ENCODE measurements at regions of chr12 and their contacts with region 1.

Region 1: GRCh38 chr12:12008931-12009611 is 61.7 kb upstream of the BCL2L14 start:
- DNase-seq: peak in 4 of 5 donors; percentile 14 to 69 (median 21)
- H3K4me3 ChIP-seq: no peak overlapping the region
- H3K4me3 Mint-ChIP-seq: peak overlapping the region; percentile 55 to 94 (median 78)
- H3K27ac ChIP-seq: no peak overlapping the region
- H3K27ac Mint-ChIP-seq: peak overlapping the region; percentile 90 to 99 (median 94)
- H3K4me1 ChIP-seq: peaks cover 49% of the 10 kb centered on the region
- H3K4me1 Mint-ChIP-seq: peaks cover 58 to 84% (median 74%) of the 10 kb centered on the region in 3 donors
- H3K27me3 ChIP-seq: no peaks in the 10 kb centered on the region
- H3K27me3 Mint-ChIP-seq: peaks cover 0 to 6% of the 10 kb centered on the region in 2 donors

Region 2: DNA sequence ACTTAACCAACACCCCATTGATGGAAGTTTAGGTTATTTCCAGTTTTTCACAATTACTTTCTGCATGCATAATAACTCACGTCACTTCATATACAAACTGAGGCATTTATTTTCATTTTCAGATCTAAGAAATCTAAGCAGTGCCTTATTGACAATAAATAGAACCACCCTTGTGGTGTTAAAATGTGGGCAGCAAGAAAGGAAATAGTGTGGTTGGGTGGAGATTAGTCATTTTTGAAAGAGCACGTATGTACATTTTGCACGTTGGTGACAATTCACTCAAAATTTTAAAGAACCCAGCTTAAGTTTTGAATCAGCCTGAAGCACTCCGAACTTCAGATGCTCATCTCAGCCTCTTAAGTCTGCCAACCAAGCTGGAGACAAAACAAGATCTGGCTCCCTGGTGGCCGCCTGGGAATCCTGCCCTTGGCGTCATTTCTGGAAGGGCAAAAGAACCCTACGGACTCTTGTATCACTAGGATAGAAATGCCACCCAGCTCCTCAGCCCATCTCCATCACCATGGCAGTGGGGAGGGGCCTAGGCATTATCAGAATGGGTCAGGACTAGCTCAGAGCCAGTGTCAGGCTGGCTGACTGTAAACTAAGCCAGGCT is 27.8 kb before region 1 on chr12:
- CTCF ChIA-PET with region 1: interaction called, 20 read pairs
- POLR2A ChIA-PET with region 1: interaction called, 4 read pairs
- DNase-seq: peak; percentile 3 to 88 (median 65)
- H3K4me3 ChIP-seq: peak overlapping the region; percentile 35
- H3K4me3 Mint-ChIP-seq: peak overlapping the region; percentile 0 to 76 (median 58)
- H3K27ac ChIP-seq: peak overlapping the region; percentile 49
- H3K27ac Mint-ChIP-seq: peak overlapping the region; percentile 55 to 99 (median 94)
- H3K4me1 ChIP-seq: peaks cover 32% of the 10 kb centered on the region
- H3K4me1 Mint-ChIP-seq: peaks cover 41 to 64% (median 62%) of the 10 kb centered on the region in 3 donors
- H3K27me3 ChIP-seq: no peaks in the 10 kb centered on the region
- H3K27me3 Mint-ChIP-seq: no peaks in the 10 kb centered on the region

Region 3: DNA sequence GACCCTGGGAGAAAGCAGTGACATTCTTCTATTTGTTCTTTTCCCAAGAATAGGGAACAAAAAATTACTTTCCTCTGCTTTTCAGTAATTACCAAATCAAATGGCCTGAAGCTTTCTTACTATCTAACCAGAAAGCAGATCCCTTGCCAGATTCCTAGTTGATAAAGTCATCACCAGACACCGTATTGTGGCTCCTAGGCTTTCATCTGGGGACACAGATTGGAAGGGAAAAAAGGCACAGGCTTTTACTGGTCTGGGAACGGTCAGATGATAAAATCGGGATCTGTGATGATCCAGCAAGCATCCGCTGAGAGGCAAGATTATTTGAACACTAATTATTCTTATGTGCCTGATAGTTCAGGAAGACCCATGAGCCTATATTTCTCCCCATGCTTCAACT is 17.5 kb before region 1 on chr12:
- CTCF ChIA-PET with region 1: interaction called, 10 read pairs
- POLR2A ChIA-PET with region 1: no interaction called
- DNase-seq: no peak
- H3K4me3 ChIP-seq: no peak overlapping the region
- H3K4me3 Mint-ChIP-seq: no peak overlapping the region
- H3K27ac ChIP-seq: no peak overlapping the region
- H3K27ac Mint-ChIP-seq: no peak overlapping the region
- H3K4me1 ChIP-seq: no peaks in the 10 kb centered on the region
- H3K4me1 Mint-ChIP-seq: peaks cover 6 to 31% (median 9%) of the 10 kb centered on the region in 3 donors
- H3K27me3 ChIP-seq: no peaks in the 10 kb centered on the region
- H3K27me3 Mint-ChIP-seq: no peaks in the 10 kb centered on the region

Region 4: GRCh38 chr12:11998944-11999315 is 10.1 kb before region 1 on chr12:
- CTCF ChIA-PET with region 1: interaction called, 13 read pairs
- POLR2A ChIA-PET with region 1: interaction called, 4 read pairs
- DNase-seq: no peak
- H3K4me3 ChIP-seq: no peak overlapping the region
- H3K4me3 Mint-ChIP-seq: peak overlapping the region in 6 of 7 donors; percentile 36 to 60 (median 46)
- H3K27ac ChIP-seq: no peak overlapping the region
- H3K27ac Mint-ChIP-seq: peak overlapping the region; percentile 58 to 88 (median 84)
- H3K4me1 ChIP-seq: peaks cover 25% of the 10 kb centered on the region
- H3K4me1 Mint-ChIP-seq: peaks cover 33 to 56% (median 53%) of the 10 kb centered on the region in 3 donors
- H3K27me3 ChIP-seq: no peaks in the 10 kb centered on the region
- H3K27me3 Mint-ChIP-seq: no peaks in the 10 kb centered on the region

Region 5: GRCh38 chr12:12024911-12025682 is 16.0 kb after region 1 on chr12:
- CTCF ChIA-PET with region 1: interaction called, 17 read pairs
- POLR2A ChIA-PET with region 1: interaction called, 3 read pairs
- DNase-seq: peak in 1 of 5 donors; percentile 56
- H3K4me3 ChIP-seq: no peak overlapping the region
- H3K4me3 Mint-ChIP-seq: peak overlapping the region; percentile 11 to 56 (median 37)
- H3K27ac ChIP-seq: no peak overlapping the region
- H3K27ac Mint-ChIP-seq: peak overlapping the region; percentile 27 to 81 (median 58)
- H3K4me1 ChIP-seq: peaks cover 13% of the 10 kb centered on the region
- H3K4me1 Mint-ChIP-seq: peaks cover 13 to 45% (median 20%) of the 10 kb centered on the region in 3 donors
- H3K27me3 ChIP-seq: no peaks in the 10 kb centered on the region
- H3K27me3 Mint-ChIP-seq: peaks cover 0 to 4% of the 10 kb centered on the region in 2 donors

Region 6: GRCh38 chr12:12032851-12033588 is 23.9 kb after region 1 on chr12:
- CTCF ChIA-PET with region 1: interaction called, 41 read pairs
- POLR2A ChIA-PET with region 1: no interaction called
- DNase-seq: peak in 4 of 5 donors; percentile 55 to 75 (median 64)
- H3K4me3 ChIP-seq: peak overlapping the region; percentile 70
- H3K4me3 Mint-ChIP-seq: peak overlapping the region; percentile 68 to 92 (median 78)
- H3K27ac ChIP-seq: no peak overlapping the region
- H3K27ac Mint-ChIP-seq: peak overlapping the region; percentile 17 to 94 (median 66)
- H3K4me1 ChIP-seq: peaks cover 14% of the 10 kb centered on the region
- H3K4me1 Mint-ChIP-seq: peaks cover 17 to 33% (median 20%) of the 10 kb centered on the region in 3 donors
- H3K27me3 ChIP-seq: no peaks in the 10 kb centered on the region
- H3K27me3 Mint-ChIP-seq: peaks cover 0 to 8% of the 10 kb centered on the region in 2 donors

Region 7: GRCh38 chr12:12056951-12057350 is 47.9 kb after region 1 on chr12:
- CTCF ChIA-PET with region 1: no interaction called
- POLR2A ChIA-PET with region 1: no interaction called
- DNase-seq: no peak
- H3K4me3 ChIP-seq: no peak overlapping the region
- H3K4me3 Mint-ChIP-seq: no peak overlapping the region
- H3K27ac ChIP-seq: no peak overlapping the region
- H3K27ac Mint-ChIP-seq: no peak overlapping the region
- H3K4me1 ChIP-seq: no peaks in the 10 kb centered on the region
- H3K4me1 Mint-ChIP-seq: no peaks in the 10 kb centered on the region
- H3K27me3 ChIP-seq: no peaks in the 10 kb centered on the region
- H3K27me3 Mint-ChIP-seq: peaks cover 0 to 2% of the 10 kb centered on the region in 2 donors